GM10248 (cell line): ENCODE measurements at regions of chr17 and their contacts with region 1.

Region 1: DNA sequence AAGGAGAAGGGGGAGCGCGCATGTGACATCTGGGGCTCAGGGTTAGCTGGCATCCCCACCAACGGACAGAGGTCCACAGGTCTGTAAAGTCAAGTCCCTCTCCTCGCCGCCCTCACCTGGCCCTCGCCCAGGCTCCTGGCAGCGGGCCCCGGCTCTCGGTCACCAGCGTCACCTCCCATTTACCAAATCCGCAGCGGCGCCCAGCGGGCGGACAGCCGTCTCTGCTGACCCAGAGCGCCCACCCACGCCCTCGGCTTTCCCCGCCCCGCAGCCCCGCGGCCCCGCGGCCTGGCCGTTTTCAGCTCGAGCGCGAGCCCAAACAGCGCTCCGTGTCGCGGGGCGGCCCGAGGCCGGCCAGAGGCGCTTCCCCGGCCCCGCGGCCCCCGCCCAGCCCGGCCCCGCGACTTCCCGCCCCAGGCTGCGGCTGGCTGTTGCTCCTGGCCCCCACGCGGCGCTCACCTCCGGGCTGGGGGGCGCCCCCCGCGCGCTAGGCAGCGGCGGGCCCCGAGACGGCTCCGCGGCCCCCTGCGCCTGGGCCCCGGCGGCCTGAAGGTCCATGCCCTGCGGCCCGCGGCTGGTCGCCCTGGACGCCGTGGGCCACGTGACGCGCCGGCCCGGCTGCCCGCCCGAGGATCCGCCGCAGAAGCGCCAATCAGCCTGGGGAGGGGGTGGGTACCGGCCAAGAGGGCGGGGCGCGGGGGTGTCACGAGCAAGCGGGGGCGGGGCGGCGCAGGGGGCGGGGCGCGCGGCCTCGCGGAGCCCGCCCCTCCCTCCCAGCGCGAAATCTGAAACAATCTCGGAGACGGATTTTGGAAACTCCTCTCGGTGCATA is at the start of gene COPRS:
- DNase-seq: peak; percentile 96
- CTCF ChIP-seq: peak; percentile 26

Region 2: DNA sequence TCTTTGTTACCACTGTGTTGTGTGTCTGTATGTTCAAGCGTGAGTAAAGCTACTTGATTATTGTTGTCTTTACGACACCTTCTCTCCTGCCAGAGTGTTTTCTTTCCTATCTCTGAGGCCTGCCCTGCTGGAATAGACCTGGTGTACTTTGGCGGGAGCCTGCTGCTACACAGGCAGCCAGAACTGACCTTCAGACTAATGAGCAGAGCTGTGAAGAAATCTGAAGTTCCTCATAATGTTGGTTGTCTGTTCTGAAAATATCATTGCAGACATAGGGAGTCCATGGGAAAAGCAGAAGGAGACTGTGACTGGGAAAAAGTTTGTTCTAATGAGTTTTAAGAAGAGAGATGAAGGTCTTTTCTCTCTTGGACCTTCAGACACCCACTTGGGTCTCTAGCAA is 293.3 kb after region 1 on chr17:
- CTCF ChIA-PET with region 1: no interaction called
- POLR2A ChIA-PET with region 1: no interaction called
- DNase-seq: no peak
- CTCF ChIP-seq: no peak

Region 3: DNA sequence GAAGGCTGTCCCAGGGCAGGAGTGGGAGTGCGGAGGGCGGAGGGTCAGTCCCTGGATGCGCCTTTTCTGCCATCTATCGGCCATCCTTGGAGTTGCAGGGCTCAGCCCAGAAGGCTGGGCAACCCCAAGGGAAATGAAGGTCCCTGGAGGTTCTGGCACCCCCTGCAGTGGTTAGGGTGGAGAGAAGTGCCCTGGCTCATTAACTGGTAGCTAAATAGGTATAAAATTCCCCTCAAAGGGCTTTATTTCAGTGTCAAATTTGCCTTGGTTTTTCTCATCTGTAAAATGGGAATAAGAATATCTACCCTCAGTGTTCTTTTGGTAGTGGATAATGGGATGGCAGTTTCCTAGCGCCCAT is 460.7 kb after region 1 on chr17:
- CTCF ChIA-PET with region 1: no interaction called
- POLR2A ChIA-PET with region 1: interaction called, 10 read pairs
- DNase-seq: peak; percentile 85
- CTCF ChIP-seq: peak; percentile 97